Activated CD4-positive, alpha-beta T cell treated with anti-CD3 and anti-CD28 coated beads, Interleukin-2, amount 10 ng/mL, durations not matched to agents 24 days and 14 days (primary cell): ENCODE measurements at regions of chr19 and their contacts with region 1.

Region 1: DNA sequence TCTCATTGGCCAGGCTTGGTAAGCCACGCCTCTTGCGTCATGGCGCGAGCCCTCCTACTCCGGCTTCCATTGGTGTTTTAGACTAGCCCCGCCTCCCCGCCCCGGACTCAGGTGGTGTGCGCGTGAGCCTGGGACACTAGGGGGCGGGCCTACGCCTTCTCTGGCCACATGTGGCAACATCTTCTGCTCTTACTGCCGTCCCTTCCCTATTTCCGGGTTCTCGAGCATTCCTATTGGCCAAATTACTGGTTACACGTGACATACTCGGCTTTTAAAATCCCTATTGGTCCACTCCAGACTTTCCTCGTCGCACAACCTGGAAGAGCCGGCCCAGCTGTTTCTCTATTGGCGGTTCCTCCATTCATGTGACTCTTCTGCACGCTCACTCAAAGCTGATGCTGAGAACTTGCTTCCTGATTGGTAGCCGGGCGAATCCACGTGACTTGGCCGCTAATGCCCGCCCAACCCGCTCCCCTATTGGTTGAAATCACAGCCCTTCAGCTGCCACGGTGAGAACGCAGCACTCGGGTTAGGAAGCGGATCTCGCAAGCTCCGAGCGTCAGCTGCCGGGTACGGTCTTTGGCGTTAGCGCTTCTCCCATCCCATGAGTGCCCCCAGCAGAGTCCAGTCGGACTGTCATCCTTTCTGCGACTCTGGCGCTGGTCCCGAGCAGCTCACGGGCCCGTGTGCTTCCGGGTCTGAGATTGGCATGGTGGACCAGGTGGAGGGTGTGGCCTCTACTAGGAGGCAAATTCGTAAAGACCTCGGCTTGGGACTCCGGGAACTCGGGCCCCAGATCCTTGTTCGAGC is at the start of gene BLOC1S3:
- DNase-seq: peak; percentile 100
- H3K4me3 Mint-ChIP-seq: peak within 1 kb of the TSS; percentile 88
- H3K27ac Mint-ChIP-seq: peak within 1 kb of the TSS; percentile 93
- H3K4me1 Mint-ChIP-seq: peaks cover 20% of the 10 kb centered on the region
- H3K27me3 Mint-ChIP-seq: no peaks in the 10 kb centered on the region
- total RNA-seq, gene BLOC1S3: 10.1 and 12.2 TPM in 2 replicates

Region 2: DNA sequence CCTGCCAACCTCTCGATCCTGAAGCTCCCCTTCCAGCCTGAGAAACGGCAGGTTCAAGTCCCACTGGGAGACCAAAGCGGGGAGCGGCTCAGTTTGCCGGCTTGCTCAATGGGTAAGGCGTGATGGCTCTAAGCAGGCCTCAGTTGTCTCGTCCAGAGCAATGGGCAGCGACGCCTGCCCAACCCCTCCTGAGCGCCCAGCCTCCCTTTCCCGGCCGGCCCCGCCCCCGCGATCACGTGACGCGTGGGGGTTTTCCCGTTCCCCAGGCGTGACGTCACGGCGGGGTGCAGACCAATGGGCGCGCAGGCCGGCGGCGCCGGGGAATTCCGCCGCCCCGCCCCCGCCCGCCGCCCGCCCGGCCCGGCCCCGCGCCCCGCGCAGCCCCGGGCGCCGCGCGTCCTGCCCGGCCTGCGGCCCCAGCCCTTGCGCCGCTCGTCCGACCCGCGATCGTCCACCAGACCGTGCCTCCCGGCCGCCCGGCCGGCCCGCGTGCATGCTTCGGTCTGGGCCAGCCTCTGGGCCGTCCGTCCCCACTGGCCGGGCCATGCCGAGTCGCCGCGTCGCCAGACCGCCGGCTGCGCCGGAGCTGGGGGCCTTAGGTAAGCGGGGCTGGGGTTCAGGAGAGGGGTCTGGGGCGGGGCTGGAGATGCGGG is 177.3 kb before region 1 on chr19 and contains the start of gene RELB:
- intact Hi-C with region 1: loop called (anchors 1 kb)
- DNase-seq: peak; percentile 100
- H3K4me3 Mint-ChIP-seq: peak within 1 kb of the TSS; percentile 99
- H3K27ac Mint-ChIP-seq: peak within 1 kb of the TSS; percentile 100
- H3K4me1 Mint-ChIP-seq: peaks cover 13% of the 10 kb centered on the region
- H3K27me3 Mint-ChIP-seq: no peaks in the 10 kb centered on the region
- total RNA-seq, gene RELB: 67.6 and 72.7 TPM in 2 replicates

Region 3: GRCh38 chr19:45250832-45251451 is 72.5 kb after region 1 on chr19 and contains the start of gene MARK4:
- intact Hi-C with region 1: loop called (anchors 2 kb)
- DNase-seq: peak; percentile 86
- H3K4me3 Mint-ChIP-seq: peak within 1 kb of the TSS; percentile 87
- H3K27ac Mint-ChIP-seq: peak within 1 kb of the TSS; percentile 80
- H3K4me1 Mint-ChIP-seq: peaks cover 22% of the 10 kb centered on the region
- H3K27me3 Mint-ChIP-seq: peaks cover 2% of the 10 kb centered on the region
- total RNA-seq, gene MARK4: 26.1 and 29.0 TPM in 2 replicates

Region 4: DNA sequence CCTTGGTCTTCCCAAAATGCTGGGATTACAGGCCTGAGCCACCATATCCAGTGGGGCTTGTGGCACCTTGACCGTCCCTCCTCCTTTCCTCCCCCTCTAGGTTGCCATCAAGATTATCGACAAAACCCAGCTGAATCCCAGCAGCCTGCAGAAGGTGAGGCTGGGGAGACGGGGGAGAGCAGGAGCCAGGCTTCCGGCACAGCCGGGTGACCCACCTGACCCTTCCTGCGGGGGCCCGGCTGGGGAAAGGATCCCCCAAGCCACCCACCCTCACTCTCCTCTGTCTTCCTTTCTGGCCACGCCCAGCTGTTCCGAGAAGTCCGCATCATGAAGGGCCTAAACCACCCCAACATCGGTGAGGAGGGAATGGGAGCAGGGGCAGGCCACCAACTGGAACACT is 84.5 kb after region 1 on chr19:
- intact Hi-C with region 1: no loop called
- DNase-seq: no peak
- H3K4me3 Mint-ChIP-seq: no peak overlapping the region
- H3K27ac Mint-ChIP-seq: no peak overlapping the region
- H3K4me1 Mint-ChIP-seq: no peaks in the 10 kb centered on the region
- H3K27me3 Mint-ChIP-seq: no peaks in the 10 kb centered on the region

Region 5: DNA sequence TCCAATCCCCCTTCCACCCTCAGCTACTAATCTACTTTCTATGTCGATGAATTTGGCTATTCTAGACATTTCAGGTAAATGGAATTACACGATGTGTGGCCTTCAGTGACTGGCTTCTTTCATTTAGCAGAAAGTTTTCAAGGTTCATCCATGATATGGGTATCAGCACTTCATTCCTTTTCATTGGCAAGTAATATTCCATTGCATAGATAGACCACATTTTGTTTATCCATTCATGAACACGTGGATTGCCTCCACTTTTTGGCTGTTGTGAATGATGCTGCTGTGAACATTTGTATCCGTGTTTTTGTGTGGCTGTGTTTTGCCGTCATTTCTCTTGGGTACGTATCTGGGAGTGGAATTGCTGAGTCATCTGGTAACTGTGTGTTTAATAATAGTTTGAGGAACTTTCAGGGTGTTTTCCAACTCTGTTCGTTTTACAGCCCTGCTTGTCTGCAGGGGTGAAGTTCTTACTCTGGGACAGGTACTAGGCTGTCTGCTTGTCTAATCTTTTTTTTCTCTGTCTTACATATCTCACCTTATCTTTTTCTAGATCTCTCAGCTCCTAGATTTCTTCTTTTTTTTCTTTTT is 105.1 kb after region 1 on chr19:
- intact Hi-C with region 1: no loop called
- DNase-seq: no peak
- H3K4me3 Mint-ChIP-seq: no peak overlapping the region
- H3K27ac Mint-ChIP-seq: no peak overlapping the region
- H3K4me1 Mint-ChIP-seq: peaks cover 2% of the 10 kb centered on the region
- H3K27me3 Mint-ChIP-seq: no peaks in the 10 kb centered on the region